HepG2 (cell line): ENCODE measurements at regions of chr16 and their contacts with region 1.

Region 1: GRCh38 chr16:56911771-56912571 is 20.0 kb upstream of the HERPUD1 start:
- DNase-seq: no peak
- ATAC-seq: peak; percentile 73
- H3K4me3 ChIP-seq: peak overlapping the region in 1 of 3 experiments; percentile 68; a peak in 2 of 6 replicates
- H3K27ac ChIP-seq: no peak overlapping the region
- H3K4me1 ChIP-seq: peaks cover 57% of the 10 kb centered on the region
- H3K27me3 ChIP-seq: peaks cover 0 to 12% of the 10 kb centered on the region in 2 experiments; a peak in 2 of 5 replicates
- CTCF ChIP-seq: no peak
- EP300 ChIP-seq: no peak
- POLR2A ChIP-seq: no peak
- RAD21 ChIP-seq: no peak

Region 2: GRCh38 chr16:56944954-56945839 is 33.2 kb after region 1 on chr16:
- CTCF ChIA-PET with region 1: no interaction called
- POLR2A ChIA-PET with region 1: interaction called, 11 read pairs
- in situ Hi-C with region 1: no loop called
- intact Hi-C with region 1: no loop called
- DNase-seq: no peak
- ATAC-seq: no peak
- H3K4me3 ChIP-seq: no peak overlapping the region
- H3K27ac ChIP-seq: no peak overlapping the region
- H3K4me1 ChIP-seq: peaks cover 43% of the 10 kb centered on the region
- H3K27me3 ChIP-seq: no peaks in the 10 kb centered on the region
- CTCF ChIP-seq: no peak
- EP300 ChIP-seq: no peak
- POLR2A ChIP-seq: peak; percentile 39 to 50; a peak in 3 of 4 replicates
- RAD21 ChIP-seq: no peak; the same call in 1 of the 2 replicates